ENCODE measurements at regions of chr2 and their contacts with region 1.

Region 1: DNA sequence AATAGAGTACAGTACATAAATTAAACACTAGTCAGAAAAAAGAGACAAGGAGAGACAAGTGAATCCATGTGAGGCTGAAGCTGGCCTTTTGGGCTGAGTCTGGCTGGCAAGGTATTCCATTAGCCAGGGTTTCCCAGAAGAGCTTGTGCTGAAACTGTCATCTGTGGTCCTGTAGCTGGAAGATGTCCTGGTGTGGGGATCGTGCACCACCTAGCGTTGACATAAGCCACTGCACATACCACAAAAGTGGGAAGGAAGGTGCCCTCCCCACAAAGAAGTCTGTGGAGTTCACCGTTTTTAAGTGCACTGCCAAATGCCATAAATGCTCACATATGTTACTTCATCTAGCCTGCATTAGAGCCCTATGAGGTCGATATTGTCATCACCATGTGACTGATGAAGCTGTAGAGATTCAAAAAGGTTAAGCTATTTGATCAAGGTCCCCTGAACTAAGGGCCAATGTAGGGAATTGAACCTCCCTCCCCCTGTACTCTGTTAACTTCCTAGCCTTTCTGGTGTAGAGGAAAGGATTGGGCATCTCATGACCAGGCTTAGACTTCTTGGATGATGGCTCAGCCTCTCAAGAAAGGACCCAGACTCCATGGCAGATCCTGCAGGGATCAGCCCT is 31.9 kb upstream of the GALNT14 start:
- DNase-seq: peak; percentile 87
- H3K4me3 ChIP-seq: no peak overlapping the region; a peak in 1 of 4 replicates
- H3K27ac ChIP-seq: no peak overlapping the region
- H3K4me1 ChIP-seq: peaks cover 0 to 11% of the 10 kb centered on the region in 2 experiments; a peak in 1 of 4 replicates
- H3K27me3 ChIP-seq: no peaks in the 10 kb centered on the region
- CTCF ChIP-seq: peak; percentile 97
- EP300 ChIP-seq: no peak
- RAD21 ChIP-seq: peak; percentile 100

Region 2: GRCh38 chr2:30165050-30165520 is 1005.1 kb before region 1 on chr2:
- CTCF ChIA-PET with region 1: interaction called, 45 read pairs
- POLR2A ChIA-PET with region 1: no interaction called
- DNase-seq: peak; percentile 88
- H3K4me3 ChIP-seq: no peak overlapping the region; a peak in 1 of 4 replicates
- H3K27ac ChIP-seq: no peak overlapping the region
- H3K4me1 ChIP-seq: peaks cover 2 to 9% of the 10 kb centered on the region in 2 experiments; a peak in 3 of 4 replicates
- H3K27me3 ChIP-seq: no peaks in the 10 kb centered on the region
- CTCF ChIP-seq: peak; percentile 99
- EP300 ChIP-seq: peak in 1 of 2 experiments; percentile 26; a peak in 1 of 4 replicates
- RAD21 ChIP-seq: peak; percentile 97

Region 3: DNA sequence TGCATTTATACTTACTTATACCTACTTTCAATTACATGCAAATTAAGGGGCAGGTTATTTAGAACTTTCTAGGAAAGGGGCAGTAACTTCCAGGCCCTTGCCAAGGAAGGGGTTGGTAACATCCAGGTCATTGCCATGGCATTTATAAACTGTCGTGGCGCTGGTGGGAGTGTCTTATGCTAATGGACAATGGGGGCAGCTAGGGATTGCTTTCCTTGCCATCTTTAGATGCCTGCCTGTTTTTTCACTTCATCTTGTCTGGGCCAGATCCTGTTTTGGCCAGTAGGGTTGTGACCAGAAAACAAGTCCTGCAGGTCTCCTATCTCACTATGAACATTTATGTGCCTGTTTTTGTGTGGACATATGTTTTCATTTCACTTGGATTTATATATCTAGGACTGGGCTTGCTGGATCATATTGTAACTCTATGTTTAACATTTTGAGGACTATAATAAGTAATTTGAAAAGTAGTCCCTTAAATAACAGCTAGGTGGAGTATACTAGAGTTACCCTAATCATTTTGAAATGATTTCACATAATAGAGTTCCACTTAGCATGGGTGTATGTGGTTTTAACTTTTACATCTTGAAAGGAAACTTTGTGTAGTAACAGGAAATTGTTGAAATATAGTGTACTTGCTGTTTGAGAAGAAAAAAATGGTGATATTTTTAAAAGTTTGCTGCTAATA is 667.0 kb before region 1 on chr2:
- CTCF ChIA-PET with region 1: no interaction called
- POLR2A ChIA-PET with region 1: no interaction called
- DNase-seq: no peak
- H3K4me3 ChIP-seq: no peak overlapping the region
- H3K27ac ChIP-seq: no peak overlapping the region; a peak in 1 of 4 replicates
- H3K4me1 ChIP-seq: peaks cover 0 to 6% of the 10 kb centered on the region in 2 experiments; a peak in 2 of 4 replicates
- H3K27me3 ChIP-seq: no peaks in the 10 kb centered on the region
- CTCF ChIP-seq: peak; percentile 39; the same call in 1 of the 2 replicates
- EP300 ChIP-seq: no peak
- RAD21 ChIP-seq: no peak

Region 4: DNA sequence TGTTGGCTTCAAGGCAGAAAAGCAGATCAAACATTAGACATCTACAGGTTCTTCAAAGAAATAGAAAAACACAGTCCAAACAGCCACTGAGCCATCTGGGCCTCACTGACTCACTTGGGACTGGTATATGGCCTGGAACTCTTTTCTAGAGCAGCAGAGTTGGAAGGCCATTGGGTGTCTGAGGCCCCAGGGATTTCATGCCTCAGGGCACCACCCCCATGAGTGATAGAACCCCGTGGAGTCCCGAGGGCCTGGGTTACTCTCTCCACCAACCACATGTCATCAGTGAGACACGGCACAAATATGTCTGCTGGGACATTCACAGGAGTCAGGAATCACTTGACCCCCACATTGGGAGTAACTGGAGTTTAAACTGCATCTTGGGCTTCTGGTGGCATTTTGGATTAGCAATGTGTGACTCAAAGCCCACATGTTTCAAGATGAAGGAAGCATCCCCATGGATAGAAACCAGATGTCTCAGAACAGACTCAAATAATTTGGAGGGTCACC is 407.0 kb before region 1 on chr2:
- CTCF ChIA-PET with region 1: interaction called, 18 read pairs
- POLR2A ChIA-PET with region 1: no interaction called
- DNase-seq: no peak
- H3K4me3 ChIP-seq: no peak overlapping the region
- H3K27ac ChIP-seq: no peak overlapping the region
- H3K4me1 ChIP-seq: peaks cover 0 to 36% of the 10 kb centered on the region in 2 experiments; a peak in 2 of 4 replicates
- H3K27me3 ChIP-seq: no peaks in the 10 kb centered on the region
- CTCF ChIP-seq: no peak
- EP300 ChIP-seq: no peak
- RAD21 ChIP-seq: no peak

Region 5: GRCh38 chr2:30947686-30948085 is 222.5 kb before region 1 on chr2:
- CTCF ChIA-PET with region 1: interaction called, 12 read pairs
- POLR2A ChIA-PET with region 1: no interaction called
- DNase-seq: no peak
- H3K4me3 ChIP-seq: no peak overlapping the region
- H3K27ac ChIP-seq: no peak overlapping the region
- H3K4me1 ChIP-seq: peaks cover 0 to 8% of the 10 kb centered on the region in 2 experiments; a peak in 1 of 4 replicates
- H3K27me3 ChIP-seq: no peaks in the 10 kb centered on the region
- CTCF ChIP-seq: no peak
- EP300 ChIP-seq: no peak
- RAD21 ChIP-seq: no peak

Region 6: GRCh38 chr2:31008561-31009114 is 161.5 kb before region 1 on chr2:
- CTCF ChIA-PET with region 1: interaction called, 12 read pairs
- POLR2A ChIA-PET with region 1: no interaction called
- DNase-seq: peak; percentile 67
- H3K4me3 ChIP-seq: no peak overlapping the region
- H3K27ac ChIP-seq: peak overlapping the region in 1 of 2 experiments; percentile 60; a peak in 2 of 4 replicates
- H3K4me1 ChIP-seq: peaks cover 0 to 64% of the 10 kb centered on the region in 2 experiments; a peak in 3 of 4 replicates
- H3K27me3 ChIP-seq: no peaks in the 10 kb centered on the region
- CTCF ChIP-seq: no peak
- EP300 ChIP-seq: no peak
- RAD21 ChIP-seq: no peak

Region 7: DNA sequence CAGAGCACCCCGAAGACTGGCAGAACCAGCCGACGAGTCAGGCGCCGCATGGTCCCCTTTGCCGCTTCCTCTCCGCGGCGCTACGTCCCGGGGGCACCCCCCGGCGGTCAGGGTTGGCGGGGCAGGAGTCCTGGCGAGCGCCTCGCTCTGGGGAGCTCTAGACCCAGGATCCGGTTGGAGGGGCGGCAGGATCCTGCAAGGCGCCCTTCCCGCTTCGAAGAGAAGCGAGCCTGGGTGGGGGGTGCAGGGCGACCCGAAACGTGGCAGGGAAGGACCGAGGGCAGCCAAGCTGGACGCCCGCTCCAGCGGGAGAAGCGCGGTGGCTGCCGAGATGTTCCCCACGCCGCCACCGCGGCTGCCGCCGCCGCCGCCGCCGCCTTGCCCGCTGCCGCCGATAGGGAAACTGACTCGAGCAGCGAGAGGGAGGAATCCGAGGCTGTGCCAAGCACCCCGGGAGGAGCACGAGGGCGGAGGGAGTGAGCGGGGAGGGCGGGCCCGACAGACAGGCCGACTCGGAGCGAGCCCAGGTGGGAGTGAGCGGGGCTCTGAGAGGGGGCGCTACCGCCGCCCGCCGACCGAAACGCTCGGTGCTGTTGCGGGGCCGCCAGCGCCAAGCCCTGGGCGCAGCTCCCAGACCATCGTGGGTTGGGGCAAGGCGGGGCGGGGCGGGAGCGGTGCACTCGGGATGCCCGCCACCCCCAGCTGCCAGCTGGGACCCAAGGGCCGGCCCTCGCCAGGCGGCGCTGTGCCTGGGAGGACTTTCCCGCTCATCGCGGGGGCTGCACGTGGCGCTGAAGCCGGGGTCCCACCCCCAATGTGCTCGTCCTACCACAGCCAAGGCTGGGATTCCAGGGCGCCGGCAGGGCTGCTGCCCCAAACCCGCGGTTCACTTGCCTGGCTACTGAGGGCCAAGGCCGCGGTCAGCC is 31.9 kb before region 1 on chr2 and contains the start of gene GALNT14:
- CTCF ChIA-PET with region 1: interaction called, 81 read pairs
- POLR2A ChIA-PET with region 1: interaction called, 3 read pairs
- DNase-seq: peak; percentile 98
- H3K4me3 ChIP-seq: peak within 1 kb of the TSS; percentile 55 to 64
- H3K27ac ChIP-seq: peak within 1 kb of the TSS in 1 of 2 experiments; percentile 68; a peak in 2 of 4 replicates
- H3K4me1 ChIP-seq: peaks cover 0 to 22% of the 10 kb centered on the region in 2 experiments; a peak in 1 of 4 replicates
- H3K27me3 ChIP-seq: peaks cover 57% of the 10 kb centered on the region
- CTCF ChIP-seq: peak; percentile 52
- EP300 ChIP-seq: peak in 1 of 2 experiments; percentile 16; a peak in 1 of 4 replicates
- RAD21 ChIP-seq: peak; percentile 67
- polyA plus RNA-seq, gene GALNT14: 1.6 and 1.8 TPM in 2 replicates

Region 8: DNA sequence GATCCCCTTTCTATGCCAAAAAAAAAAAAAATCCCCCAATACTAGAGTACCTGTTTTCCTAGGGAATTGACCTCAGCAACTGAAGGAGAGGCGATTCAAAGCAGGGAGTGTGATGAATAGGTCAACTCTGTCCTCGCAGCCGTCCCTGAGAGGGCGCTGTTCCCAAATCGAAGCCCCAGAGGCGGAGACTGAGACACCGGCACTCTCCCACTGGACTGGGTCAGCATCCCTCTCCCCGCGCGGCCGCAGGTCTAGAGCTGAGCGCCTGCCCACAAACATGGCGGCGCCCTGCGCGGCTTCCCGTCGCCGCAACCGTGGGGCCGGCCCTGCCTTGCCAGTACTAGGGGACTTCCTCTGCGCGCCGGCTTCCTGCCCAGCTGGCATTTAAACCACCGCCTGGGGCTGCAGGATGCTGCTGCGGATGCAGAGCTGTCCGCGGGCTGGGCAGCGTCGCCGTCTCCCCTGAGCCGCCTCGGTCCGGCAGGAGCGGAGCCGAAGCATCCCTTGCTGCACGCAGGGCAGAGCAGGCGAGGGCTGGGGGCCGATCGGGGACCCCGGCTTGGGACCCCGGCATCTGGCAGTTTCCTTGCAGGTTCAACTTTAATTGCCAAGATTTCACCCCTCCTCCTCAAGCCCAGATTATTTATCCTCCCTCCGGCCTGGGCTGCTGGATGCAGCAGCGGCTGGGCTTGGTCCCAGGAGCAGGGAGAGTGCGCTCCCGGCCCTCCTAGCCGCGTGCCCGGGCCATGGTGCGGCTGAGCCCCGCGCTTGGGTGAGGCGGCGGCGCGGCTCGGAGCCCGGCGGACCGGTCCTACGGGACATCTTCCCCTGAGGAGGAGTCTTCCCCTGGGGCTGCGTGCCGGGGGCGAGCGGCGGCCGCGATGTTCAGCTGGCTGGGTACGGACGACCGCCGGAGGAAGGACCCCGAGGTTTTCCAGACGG is 63.8 kb after region 1 on chr2 and contains the start of gene EHD3:
- CTCF ChIA-PET with region 1: interaction called, 21 read pairs
- POLR2A ChIA-PET with region 1: no interaction called
- DNase-seq: peak; percentile 98
- H3K4me3 ChIP-seq: peak within 1 kb of the TSS; percentile 74 to 89
- H3K27ac ChIP-seq: peak within 1 kb of the TSS; percentile 19 to 92; a peak in 3 of 4 replicates
- H3K4me1 ChIP-seq: peaks cover 15 to 42% of the 10 kb centered on the region in 2 experiments; a peak in 3 of 4 replicates
- H3K27me3 ChIP-seq: no peaks in the 10 kb centered on the region
- CTCF ChIP-seq: peak; percentile 85
- EP300 ChIP-seq: peak in 1 of 2 experiments; percentile 24; a peak in 2 of 4 replicates
- RAD21 ChIP-seq: peak; percentile 80
- polyA plus RNA-seq, gene EHD3: 45.3 and 45.4 TPM in 2 replicates

Measured in SK-N-SH (cell line).